Colonic mucosa (tissue), 4 donors: ENCODE measurements at regions of chr19 and their contacts with region 1.

Region 1: GRCh38 chr19:984165-984967 is at the start of gene WDR18:
- DNase-seq: peak; percentile 94
- H3K4me3 ChIP-seq: peak within 1 kb of the TSS; percentile 86
- H3K27ac ChIP-seq: peak within 1 kb of the TSS; percentile 57
- H3K4me1 ChIP-seq: no peaks in the 10 kb centered on the region
- H3K27me3 ChIP-seq: no peaks in the 10 kb centered on the region
- CTCF ChIP-seq: no peak
- total RNA-seq, gene WDR18: 26.5 to 81.5 TPM

Region 2: DNA sequence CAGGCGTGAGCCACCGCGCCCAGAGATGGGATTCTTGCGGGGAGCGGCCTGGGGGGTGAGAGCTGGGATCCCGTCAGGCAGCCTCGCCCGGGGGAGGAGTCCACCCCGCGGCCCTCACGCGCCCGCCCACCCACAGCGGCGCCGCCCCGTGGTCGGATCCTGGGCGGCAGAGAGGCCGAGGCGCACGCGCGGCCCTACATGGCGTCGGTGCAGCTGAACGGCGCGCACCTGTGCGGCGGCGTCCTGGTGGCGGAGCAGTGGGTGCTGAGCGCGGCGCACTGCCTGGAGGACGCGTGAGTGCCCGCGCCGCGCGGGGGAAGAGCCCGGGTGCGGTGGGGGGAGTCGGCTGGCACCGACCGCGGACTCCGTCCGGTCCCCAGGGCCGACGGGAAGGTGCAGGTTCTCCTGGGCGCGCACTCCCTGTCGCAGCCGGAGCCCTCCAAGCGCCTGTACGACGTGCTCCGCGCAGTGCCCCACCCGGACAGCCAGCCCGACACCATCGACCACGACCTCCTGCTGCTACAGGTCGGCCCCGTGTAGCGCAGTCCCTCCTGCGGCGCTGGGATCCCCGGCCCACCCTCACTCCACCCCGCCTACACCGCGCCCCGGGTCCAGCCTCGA is 123.8 kb before region 1 on chr19:
- intact Hi-C with region 1: loop called (anchors 10 kb)
- DNase-seq: peak; percentile 71
- H3K4me3 ChIP-seq: peak overlapping the region; percentile 32
- H3K27ac ChIP-seq: no peak overlapping the region
- H3K4me1 ChIP-seq: no peaks in the 10 kb centered on the region
- H3K27me3 ChIP-seq: peaks cover 9% of the 10 kb centered on the region
- CTCF ChIP-seq: no peak

Region 3: DNA sequence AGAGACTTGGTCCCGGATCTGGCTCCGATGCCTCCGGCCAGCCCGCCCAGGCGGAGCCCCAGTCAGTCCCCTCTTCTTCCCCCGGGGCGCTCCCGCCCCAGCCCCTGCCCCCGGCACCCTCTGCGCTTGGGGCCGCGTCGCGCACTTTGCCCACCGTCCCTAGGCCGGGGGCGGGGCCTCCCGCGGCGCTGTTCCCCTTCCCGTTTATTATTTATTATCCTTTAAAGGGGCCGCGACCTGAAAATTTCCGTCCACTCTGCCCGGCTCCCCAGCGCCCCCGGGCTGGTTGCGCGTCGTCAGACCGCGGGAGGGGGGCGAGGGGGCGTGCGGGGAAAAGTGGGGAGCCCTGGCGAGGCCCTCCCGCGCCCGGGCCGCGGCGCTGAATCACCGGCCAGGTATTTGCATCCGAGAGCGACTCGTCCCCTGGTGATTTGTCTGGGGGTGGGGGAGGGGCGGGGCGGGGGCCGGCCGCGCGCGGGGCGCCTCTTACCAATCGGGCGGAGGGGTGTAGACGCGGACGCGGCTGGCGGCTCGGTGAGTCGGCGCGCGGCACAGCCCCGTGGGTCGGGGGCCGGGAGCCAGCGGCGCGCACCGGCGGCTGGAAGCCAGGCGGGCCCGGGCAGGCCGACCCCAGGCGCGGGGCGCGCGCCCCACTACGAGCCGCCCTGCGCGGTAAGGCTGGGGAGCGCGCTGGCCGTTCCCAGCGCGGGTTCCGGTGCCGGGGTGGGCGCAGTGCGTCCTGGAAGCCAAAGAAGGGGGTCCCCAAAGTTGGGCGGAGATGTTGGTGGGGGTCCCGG is 58.6 kb before region 1 on chr19 and contains the start of gene ARID3A:
- intact Hi-C with region 1: loop called (anchors 1 kb)
- DNase-seq: peak; percentile 73
- H3K4me3 ChIP-seq: peak within 1 kb of the TSS; percentile 91
- H3K27ac ChIP-seq: peak within 1 kb of the TSS; percentile 78
- H3K4me1 ChIP-seq: no peaks in the 10 kb centered on the region
- H3K27me3 ChIP-seq: peaks cover under 1% of the 10 kb centered on the region
- CTCF ChIP-seq: no peak
- total RNA-seq, gene ARID3A: 8.7 to 13.0 TPM

Region 4: DNA sequence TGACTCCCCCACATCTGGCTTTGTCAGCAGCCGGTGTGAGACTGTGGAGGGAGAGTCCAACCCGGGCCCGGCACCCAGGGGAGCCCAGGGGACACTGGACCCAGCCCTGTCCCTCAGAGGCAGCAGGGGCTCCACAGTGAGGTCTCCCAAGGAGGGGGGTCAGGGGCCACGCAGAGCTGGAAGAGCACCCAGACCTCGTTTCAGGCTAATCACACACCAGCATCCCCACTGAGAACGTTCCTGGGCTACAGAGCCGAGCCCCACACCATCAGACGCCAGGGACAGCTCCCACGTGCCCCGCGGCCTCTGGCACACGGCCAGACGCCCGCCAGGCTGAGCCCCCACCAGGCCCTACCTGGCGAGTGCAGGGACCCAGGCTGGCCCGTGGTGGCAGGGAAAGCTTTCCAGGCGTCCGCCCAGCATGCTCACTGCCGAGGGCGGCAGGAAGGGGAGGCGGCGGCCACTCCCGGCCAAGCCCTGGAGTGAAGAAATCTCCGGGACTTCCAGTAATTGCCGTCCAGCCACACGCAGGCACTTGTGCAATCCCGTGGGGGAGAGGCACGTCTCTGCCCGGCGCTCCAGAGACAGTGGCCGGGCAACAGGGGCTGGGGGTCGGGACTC is 170.5 kb after region 1 on chr19:
- intact Hi-C with region 1: no loop called
- DNase-seq: peak; percentile 82
- H3K4me3 ChIP-seq: peak overlapping the region; percentile 23
- H3K27ac ChIP-seq: peak overlapping the region; percentile 91
- H3K4me1 ChIP-seq: peaks cover 14% of the 10 kb centered on the region
- H3K27me3 ChIP-seq: no peaks in the 10 kb centered on the region
- CTCF ChIP-seq: no peak